CD14-positive monocyte (primary cell): ENCODE measurements at regions of chrX and their contacts with region 1.

Region 1: GRCh38 chrX:23782863-23783568 is at the start of gene SAT1:
- DNase-seq: peak; percentile 94 to 95 (median 94)
- H3K4me3 ChIP-seq: peak within 1 kb of the TSS; percentile 78 to 99 (median 99)
- H3K4me3 Mint-ChIP-seq: peak within 1 kb of the TSS; percentile 94
- H3K27ac ChIP-seq: peak within 1 kb of the TSS; percentile 93 to 94
- H3K27ac Mint-ChIP-seq: peak within 1 kb of the TSS; percentile 94 to 99 (median 98)
- H3K4me1 ChIP-seq: peaks cover 27 to 37% of the 10 kb centered on the region in 2 donors
- H3K4me1 Mint-ChIP-seq: peaks cover 12% of the 10 kb centered on the region
- H3K27me3 ChIP-seq: no peaks in the 10 kb centered on the region
- H3K27me3 Mint-ChIP-seq: peaks cover 0 to 5% (median 0%) of the 10 kb centered on the region in 3 donors
- CTCF ChIP-seq: peak; percentile 80
- polyA plus RNA-seq, gene SAT1: 897 to 7,815 (median 970) TPM

Region 2: DNA sequence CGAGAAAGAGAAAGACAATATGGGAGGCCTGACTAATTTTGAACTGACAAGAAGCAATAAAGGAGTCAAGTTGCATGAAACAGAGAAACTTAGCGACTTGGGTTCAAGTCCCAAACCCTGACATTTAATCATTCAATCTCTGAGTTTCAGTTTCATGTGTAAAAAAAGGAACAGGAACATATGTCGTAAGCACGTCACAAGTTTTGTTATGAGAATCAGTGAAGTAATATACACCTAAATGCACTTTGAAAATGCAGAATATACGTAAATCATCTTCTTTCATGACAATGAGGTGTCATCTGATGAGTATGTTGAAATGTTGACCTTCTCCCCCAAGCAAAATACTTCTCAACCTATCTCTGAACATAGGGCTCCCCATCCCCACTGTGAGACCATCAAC is 50.3 kb before region 1 on chrX:
- intact Hi-C with region 1: loop called in 1 of 2 experiments (anchors 2 kb)
- DNase-seq: peak; percentile 73 to 87 (median 80)
- H3K4me3 ChIP-seq: no peak overlapping the region
- H3K4me3 Mint-ChIP-seq: no peak overlapping the region
- H3K27ac ChIP-seq: peak overlapping the region; percentile 68 to 81
- H3K27ac Mint-ChIP-seq: peak overlapping the region; percentile 86 to 97 (median 92)
- H3K4me1 ChIP-seq: peaks cover 10 to 15% of the 10 kb centered on the region in 2 donors
- H3K4me1 Mint-ChIP-seq: peaks cover 23% of the 10 kb centered on the region
- H3K27me3 ChIP-seq: no peaks in the 10 kb centered on the region
- H3K27me3 Mint-ChIP-seq: peaks cover 0 to 6% (median 0%) of the 10 kb centered on the region in 3 donors
- CTCF ChIP-seq: no peak

Region 3: DNA sequence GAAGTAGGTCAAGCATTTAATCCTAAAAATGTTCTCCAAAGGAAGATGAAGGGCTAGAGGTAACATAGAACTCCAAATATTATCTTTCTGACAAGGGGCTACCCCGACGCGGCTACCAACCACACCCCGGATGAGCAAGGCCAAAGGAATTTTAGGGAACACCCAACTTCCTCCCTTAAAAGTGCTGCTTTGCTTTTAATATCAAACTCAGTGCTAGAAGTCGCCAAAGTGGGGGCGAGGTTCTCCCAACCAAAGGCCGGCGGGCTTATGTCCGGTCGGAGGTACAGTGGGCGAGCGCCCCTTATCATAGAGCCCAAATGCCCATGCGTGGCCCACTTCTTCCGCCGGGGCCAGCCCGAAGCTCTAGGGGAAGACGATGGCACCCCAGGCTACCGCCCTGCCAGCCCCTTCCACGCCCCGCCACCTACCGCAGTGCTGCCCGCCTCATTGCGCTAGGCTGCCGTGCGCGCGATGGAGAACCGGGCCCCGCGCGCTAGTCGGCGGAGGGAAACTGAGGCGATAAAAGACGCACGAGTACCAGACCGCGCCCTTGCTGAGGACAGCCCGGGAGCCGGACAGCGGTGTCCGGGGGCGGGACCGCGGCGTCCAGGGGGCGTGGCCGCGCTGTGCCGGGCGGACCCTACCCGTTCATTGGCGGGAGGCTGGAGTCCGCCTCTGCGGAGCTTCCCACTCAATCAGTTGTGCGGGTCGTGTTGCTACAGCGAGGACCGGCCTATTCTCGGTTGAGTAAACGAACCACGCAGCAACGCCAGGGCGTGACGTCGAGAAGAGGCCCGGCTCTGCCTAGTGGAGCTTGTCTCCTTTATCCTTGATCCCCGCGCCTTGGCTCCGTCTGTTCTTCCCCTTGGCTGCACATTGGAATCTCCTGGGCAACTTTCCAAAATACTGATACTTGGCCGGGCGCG is 40.1 kb before region 1 on chrX and contains the start of gene ACOT9:
- intact Hi-C with region 1: loop called in 1 of 2 experiments (anchors 5 kb)
- DNase-seq: peak; percentile 84 to 93 (median 88)
- H3K4me3 ChIP-seq: peak within 1 kb of the TSS; percentile 69 to 86 (median 70)
- H3K4me3 Mint-ChIP-seq: peak within 1 kb of the TSS; percentile 85 to 89
- H3K27ac ChIP-seq: peak within 1 kb of the TSS; percentile 94 to 95
- H3K27ac Mint-ChIP-seq: peak within 1 kb of the TSS; percentile 92 to 98 (median 96)
- H3K4me1 ChIP-seq: peaks cover 21 to 23% of the 10 kb centered on the region in 2 donors
- H3K4me1 Mint-ChIP-seq: peaks cover 36% of the 10 kb centered on the region
- H3K27me3 ChIP-seq: no peaks in the 10 kb centered on the region
- H3K27me3 Mint-ChIP-seq: peaks cover 0 to 6% (median 4%) of the 10 kb centered on the region in 3 donors
- CTCF ChIP-seq: no peak
- polyA plus RNA-seq, gene ACOT9: 49.2 to 69.3 (median 51.8) TPM

Region 4: DNA sequence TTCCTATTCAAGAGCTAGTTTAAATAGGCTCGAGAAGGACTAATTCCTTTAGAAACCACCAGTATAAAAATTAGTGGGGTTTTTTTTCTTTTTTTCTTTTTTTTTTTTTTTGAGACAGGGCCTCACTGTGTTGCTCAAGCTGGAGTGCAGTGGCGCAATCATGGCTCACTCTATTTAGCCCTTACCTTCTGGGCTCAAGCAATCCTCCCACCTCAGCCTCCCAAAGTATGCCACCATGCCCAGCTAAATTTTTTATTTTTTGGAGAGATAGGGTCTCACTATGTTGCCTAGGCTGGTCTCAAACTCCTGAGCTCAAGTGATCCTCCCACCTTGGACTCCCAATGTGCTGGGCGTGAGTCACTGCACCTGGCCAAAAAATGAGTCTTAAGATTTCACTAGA is 71.9 kb after region 1 on chrX:
- intact Hi-C with region 1: loop called in 1 of 2 experiments (anchors 10 kb)
- DNase-seq: peak in 2 of 3 donors; percentile 45 to 46
- H3K4me3 ChIP-seq: no peak overlapping the region
- H3K4me3 Mint-ChIP-seq: no peak overlapping the region
- H3K27ac ChIP-seq: no peak overlapping the region
- H3K27ac Mint-ChIP-seq: peak overlapping the region in 4 of 7 donors; percentile 66 to 91 (median 76)
- H3K4me1 ChIP-seq: peaks cover 26 to 28% of the 10 kb centered on the region in 2 donors
- H3K4me1 Mint-ChIP-seq: peaks cover 23% of the 10 kb centered on the region
- H3K27me3 ChIP-seq: no peaks in the 10 kb centered on the region
- H3K27me3 Mint-ChIP-seq: peaks cover 0 to 6% (median 2%) of the 10 kb centered on the region in 3 donors
- CTCF ChIP-seq: no peak

Region 5: DNA sequence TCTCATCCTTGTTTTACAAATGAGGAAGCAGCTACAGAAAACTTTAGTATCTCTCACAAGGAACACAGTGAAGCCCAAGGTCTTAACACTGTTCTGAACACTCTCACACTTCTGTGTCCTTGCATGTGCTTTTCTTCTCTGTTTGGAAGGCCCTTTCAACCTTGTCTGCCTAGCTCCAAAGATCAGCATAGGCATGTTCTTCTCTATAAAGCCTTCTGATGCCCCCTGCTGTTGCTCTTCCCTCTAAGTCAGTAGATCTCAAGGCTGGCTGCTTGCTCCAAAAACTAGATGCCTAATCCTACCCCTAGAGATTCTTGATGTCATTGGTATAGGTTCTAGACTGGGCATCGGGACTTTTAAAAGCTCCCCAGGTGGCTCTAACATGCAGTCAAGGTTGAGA is 118.8 kb after region 1 on chrX:
- intact Hi-C with region 1: loop called (anchors 5 kb)
- DNase-seq: peak; percentile 54 to 75 (median 72)
- H3K4me3 ChIP-seq: peak overlapping the region in 1 of 3 experiments; percentile 27
- H3K4me3 Mint-ChIP-seq: no peak overlapping the region
- H3K27ac ChIP-seq: peak overlapping the region; percentile 40 to 67
- H3K27ac Mint-ChIP-seq: no peak overlapping the region
- H3K4me1 ChIP-seq: peaks cover 26 to 31% of the 10 kb centered on the region in 2 donors
- H3K4me1 Mint-ChIP-seq: peaks cover 6% of the 10 kb centered on the region
- H3K27me3 ChIP-seq: peaks cover 0 to 2% of the 10 kb centered on the region in 2 donors
- H3K27me3 Mint-ChIP-seq: peaks cover 0 to 18% (median 1%) of the 10 kb centered on the region in 3 donors
- CTCF ChIP-seq: peak; percentile 38